ENCODE measurements at regions of chr17 and their contacts with region 1.

Region 1: DNA sequence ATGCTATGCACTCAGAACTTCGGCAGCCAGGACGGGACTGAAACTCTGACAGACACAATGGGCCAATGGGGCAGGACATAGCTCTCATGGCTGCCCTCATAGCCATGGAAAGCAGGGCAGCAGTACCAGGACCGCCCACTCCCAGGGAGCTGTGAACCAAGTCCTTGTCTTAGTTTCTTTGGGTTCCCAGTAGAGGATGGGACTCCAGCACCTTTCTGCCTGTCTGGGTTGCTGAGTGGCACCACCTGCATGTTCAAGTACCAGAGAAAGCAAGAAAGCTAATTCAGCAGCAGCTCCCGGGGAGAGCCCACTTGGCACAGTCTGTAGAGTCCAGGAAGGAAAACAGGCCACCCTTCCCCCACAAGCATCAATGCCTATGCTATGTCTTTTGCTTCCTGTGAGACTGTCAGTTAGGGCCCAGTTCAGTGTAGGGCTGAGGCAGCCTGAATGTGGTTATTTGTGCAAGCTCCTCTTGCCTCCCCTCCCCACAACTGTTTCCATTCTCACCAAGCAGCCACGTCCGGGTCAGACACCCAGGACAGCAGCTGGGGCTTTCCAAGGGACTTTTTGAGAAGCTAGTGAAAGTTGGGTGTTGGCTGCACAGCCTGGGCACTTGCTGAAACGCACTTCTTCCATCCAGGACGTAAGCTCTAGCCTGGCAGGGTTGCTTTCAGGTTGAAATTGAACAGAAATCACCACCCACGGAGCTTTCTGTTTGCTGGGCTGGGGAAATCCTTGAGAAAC is 7.8 kb downstream of the SUPT4H1 start:
- DNase-seq: peak; percentile 63 to 96 (median 96)
- H3K4me3 ChIP-seq: peak overlapping the region in 6 of 7 experiments; percentile 26 to 63 (median 51)
- H3K27ac ChIP-seq: peak overlapping the region; percentile 52 to 87
- H3K4me1 ChIP-seq: peaks cover 29 to 69% (median 58%) of the 10 kb centered on the region in 4 experiments
- H3K27me3 ChIP-seq: no peaks in the 10 kb centered on the region

Region 2: DNA sequence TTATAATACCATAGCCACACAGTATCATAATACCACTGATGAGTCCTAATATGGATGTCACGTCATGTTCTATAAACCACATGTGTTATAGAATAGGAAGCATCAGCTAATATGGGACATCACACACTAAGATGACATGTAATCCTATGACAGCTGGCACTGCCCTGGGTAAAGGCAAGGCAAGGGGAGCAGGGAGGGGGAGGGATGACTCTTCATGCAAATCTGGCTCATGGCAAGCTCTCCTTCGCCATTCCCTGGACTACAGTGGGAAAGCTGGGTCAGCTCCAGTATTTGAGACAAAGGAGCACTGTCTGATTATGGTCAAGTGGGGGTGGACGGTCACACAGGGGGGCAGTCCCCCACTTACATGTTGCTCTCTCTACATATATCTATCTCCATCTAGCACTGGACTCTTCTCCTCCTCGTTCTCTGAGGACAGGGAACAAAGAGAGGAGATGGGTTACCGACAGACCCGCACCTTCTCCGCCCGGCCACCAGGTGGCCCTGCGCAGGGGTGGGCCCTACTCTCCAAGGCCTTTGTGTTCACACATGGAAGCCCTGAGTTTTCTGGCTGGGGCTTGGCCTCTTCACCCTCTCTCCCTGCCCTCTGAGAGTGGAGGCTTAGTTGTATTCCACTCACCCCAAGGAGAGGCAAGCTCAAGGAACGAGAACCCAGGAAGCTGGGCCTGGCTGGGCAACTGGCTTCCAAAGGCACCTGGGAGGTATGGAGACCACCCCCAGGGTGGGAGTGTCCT is 40.1 kb before region 1 on chr17:
- CTCF ChIA-PET with region 1: interaction called, 14 read pairs
- POLR2A ChIA-PET with region 1: no interaction called
- DNase-seq: peak; percentile 63 to 76 (median 68)
- H3K4me3 ChIP-seq: no peak overlapping the region
- H3K27ac ChIP-seq: no peak overlapping the region
- H3K4me1 ChIP-seq: peaks cover 0 to 46% (median 4%) of the 10 kb centered on the region in 4 experiments
- H3K27me3 ChIP-seq: no peaks in the 10 kb centered on the region

Region 3: DNA sequence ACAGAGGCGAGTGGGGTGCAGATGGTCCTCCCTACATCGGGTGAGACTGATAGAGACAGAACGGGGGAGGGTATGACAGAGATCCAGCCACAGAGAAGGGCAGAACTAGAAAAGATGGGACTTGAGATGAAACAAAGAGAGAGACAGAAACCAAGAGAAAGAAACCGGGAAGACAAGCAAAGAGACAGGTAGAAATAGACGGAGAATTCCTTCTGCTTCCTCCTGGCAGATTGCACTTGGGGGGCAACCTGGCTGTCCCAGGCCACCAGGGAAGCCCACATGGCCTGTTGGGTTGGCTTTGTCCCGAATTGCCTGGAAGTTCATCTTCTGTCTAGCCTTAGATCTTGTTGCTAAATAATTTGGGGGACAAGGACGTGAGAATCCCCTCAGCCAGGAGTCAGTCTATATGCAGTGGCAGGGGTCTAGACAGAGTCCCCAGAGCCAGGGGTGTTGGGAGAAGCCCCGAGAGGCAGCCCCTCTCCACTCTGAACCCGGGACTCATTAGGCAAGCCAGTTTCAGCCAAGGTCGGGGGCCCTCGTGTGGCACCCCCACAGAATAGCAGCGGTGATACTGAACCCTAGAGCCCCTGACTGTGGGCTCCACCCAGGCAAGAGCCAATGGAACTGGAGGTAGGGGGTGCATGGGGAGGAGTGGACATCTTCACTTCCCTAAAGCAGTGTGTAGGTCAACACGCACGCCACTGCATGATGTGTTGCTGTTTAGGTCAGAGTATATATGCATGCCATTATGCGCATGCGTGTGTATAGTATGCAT is 15.0 kb before region 1 on chr17:
- CTCF ChIA-PET with region 1: interaction called, 76 read pairs
- POLR2A ChIA-PET with region 1: interaction called, 85 read pairs
- DNase-seq: peak; percentile 85 to 92 (median 92)
- H3K4me3 ChIP-seq: peak overlapping the region in 6 of 7 experiments; percentile 78 to 100 (median 99)
- H3K27ac ChIP-seq: peak overlapping the region; percentile 56 to 99
- H3K4me1 ChIP-seq: peaks cover 16 to 80% (median 73%) of the 10 kb centered on the region in 4 experiments
- H3K27me3 ChIP-seq: peaks cover 0 to 6% (median 0%) of the 10 kb centered on the region in 5 experiments

Region 4: GRCh38 chr17:58417300-58418092 is 73.3 kb after region 1 on chr17 and contains the start of gene RNF43:
- CTCF ChIA-PET with region 1: interaction called, 14 read pairs
- POLR2A ChIA-PET with region 1: no interaction called
- DNase-seq: peak; percentile 91 to 95 (median 94)
- H3K4me3 ChIP-seq: peak within 1 kb of the TSS in 2 of 7 experiments; percentile 23 to 25
- H3K27ac ChIP-seq: no peak within 1 kb of the TSS
- H3K4me1 ChIP-seq: peaks cover 3 to 8% (median 5%) of the 10 kb centered on the region in 4 experiments
- H3K27me3 ChIP-seq: no peaks in the 10 kb centered on the region